Activated T-helper 1 cell treated with anti-CD3 and anti-CD28 coated beads, Interleukin-12 subunit alpha, Interleukin-12 subunit beta, Interleukin-2, Interleukin-4 antibody, amounts not matched to agents 30 ng/mL and 10 ng/mL and 1 ng/mL, durations not matched to agents 14 hours and 24 hours and 36 hours (primary cell): ENCODE measurements at regions of chr10 and their contacts with region 1.

Region 1: GRCh38 chr10:113563306-113564088 is 10.6 kb downstream of the HABP2 start:
- DNase-seq: peak; percentile 56
- H3K4me3 Mint-ChIP-seq: peak overlapping the region; percentile 72
- H3K27ac Mint-ChIP-seq: no peak overlapping the region
- H3K4me1 Mint-ChIP-seq: peaks cover 7% of the 10 kb centered on the region
- H3K27me3 Mint-ChIP-seq: no peaks in the 10 kb centered on the region

Region 2: DNA sequence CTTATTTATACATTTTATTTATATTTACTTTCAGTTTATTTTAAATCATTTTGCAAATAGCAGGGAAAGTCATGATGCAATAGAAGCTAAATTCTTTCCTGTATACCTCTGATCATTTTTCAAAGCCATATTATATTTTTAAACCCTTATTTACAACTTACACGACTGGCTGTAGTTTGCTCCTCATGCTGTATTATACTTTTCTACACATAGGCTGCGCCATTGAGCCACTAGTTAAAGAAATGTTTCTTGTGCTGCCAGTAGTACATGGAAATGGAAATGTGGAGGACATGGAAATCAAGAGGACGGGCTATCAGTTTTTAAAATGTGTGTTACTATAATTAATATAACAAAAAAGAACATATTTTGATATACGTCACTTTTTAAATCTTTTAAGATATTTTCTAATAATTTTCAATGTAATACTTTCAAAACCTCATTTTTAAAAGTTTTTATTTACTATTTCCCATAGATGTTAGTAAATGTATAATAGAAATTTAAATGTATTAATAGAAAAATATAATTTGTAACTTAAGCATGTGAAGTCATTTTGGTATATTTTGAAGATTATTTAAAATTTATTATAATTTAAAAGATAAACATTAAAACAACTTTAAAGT is 998.0 kb before region 1 on chr10:
- intact Hi-C with region 1: loop called (anchors 10 kb)
- DNase-seq: no peak
- H3K4me3 Mint-ChIP-seq: no peak overlapping the region
- H3K27ac Mint-ChIP-seq: no peak overlapping the region
- H3K4me1 Mint-ChIP-seq: no peaks in the 10 kb centered on the region
- H3K27me3 Mint-ChIP-seq: no peaks in the 10 kb centered on the region

Region 3: DNA sequence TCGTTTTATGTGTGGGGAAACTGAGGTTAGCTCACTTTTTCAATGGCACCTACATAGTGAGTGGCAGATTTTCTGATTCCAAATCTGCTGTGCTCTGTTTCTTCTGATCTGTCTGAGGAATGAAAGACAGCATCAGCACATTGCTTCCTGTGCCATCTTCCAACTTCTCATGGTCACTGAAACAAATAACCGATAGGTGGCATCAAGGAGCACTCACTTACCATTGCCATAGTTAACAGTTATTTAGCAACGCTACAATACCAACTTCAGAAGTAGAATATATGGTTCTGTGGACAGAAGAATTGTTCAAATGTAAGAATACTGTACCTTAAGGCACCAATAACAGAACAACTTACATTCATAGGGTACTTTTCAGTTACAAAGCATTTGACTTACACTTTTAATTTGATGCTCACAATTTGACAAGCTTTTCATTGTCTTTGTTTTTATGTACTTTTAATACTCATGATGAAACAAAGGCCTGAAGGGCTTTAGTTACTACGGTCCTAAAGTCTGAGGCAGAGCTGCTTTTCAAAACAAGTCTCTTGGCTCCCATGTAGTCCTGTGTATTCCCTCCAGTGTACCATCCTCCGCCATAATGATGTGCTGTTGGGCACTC is 842.3 kb before region 1 on chr10:
- intact Hi-C with region 1: loop called (anchors 1 kb)
- DNase-seq: no peak
- H3K4me3 Mint-ChIP-seq: no peak overlapping the region
- H3K27ac Mint-ChIP-seq: no peak overlapping the region
- H3K4me1 Mint-ChIP-seq: no peaks in the 10 kb centered on the region
- H3K27me3 Mint-ChIP-seq: no peaks in the 10 kb centered on the region

Region 4: GRCh38 chr10:113454341-113455061 is 109.0 kb before region 1 on chr10:
- intact Hi-C with region 1: loop called (anchors 10 kb)
- DNase-seq: no peak
- H3K4me3 Mint-ChIP-seq: no peak overlapping the region
- H3K27ac Mint-ChIP-seq: no peak overlapping the region
- H3K4me1 Mint-ChIP-seq: no peaks in the 10 kb centered on the region
- H3K27me3 Mint-ChIP-seq: no peaks in the 10 kb centered on the region

Region 5: DNA sequence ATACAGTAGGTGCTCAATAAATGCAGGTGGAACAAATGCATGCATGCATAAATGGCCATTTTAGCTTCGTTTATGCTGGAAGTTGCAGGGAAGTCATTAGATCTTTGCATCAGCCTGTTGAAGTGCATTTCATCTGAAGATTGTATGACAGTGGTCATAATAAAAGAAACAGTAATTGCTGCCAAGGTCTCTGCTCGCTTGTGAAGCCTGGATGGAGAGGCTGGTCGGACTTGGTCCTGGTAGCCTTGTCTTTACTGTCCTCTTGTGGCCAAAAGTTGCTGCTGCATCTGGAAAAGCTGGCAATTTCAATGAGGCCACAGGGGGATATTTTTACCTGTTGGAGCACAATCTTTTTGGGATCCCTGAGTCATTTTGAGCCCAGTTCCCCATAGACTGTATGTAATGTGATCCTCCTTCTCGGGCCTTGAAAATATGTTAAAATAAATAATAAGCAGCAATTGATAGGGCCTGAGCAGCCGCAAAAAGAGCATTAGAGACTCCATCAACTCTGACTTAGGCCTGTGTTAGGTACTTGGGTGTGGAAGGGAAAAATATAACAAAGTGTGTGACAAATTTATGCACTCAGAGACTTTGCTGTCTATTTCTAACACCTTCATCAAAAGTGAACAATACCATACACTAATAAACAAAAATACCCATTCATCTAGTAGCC is 42.2 kb before region 1 on chr10:
- intact Hi-C with region 1: loop called (anchors 1 kb)
- DNase-seq: no peak
- H3K4me3 Mint-ChIP-seq: no peak overlapping the region
- H3K27ac Mint-ChIP-seq: no peak overlapping the region
- H3K4me1 Mint-ChIP-seq: peaks cover 4% of the 10 kb centered on the region
- H3K27me3 Mint-ChIP-seq: peaks cover 8% of the 10 kb centered on the region

Region 6: GRCh38 chr10:113678690-113679462 is 115.4 kb after region 1 on chr10:
- intact Hi-C with region 1: no loop called
- DNase-seq: peak; percentile 66
- H3K4me3 Mint-ChIP-seq: peak overlapping the region; percentile 99
- H3K27ac Mint-ChIP-seq: peak overlapping the region; percentile 98
- H3K4me1 Mint-ChIP-seq: peaks cover 44% of the 10 kb centered on the region
- H3K27me3 Mint-ChIP-seq: peaks cover 9% of the 10 kb centered on the region

Region 7: GRCh38 chr10:113709221-113709838 is 145.8 kb after region 1 on chr10:
- intact Hi-C with region 1: no loop called
- DNase-seq: no peak
- H3K4me3 Mint-ChIP-seq: no peak overlapping the region
- H3K27ac Mint-ChIP-seq: no peak overlapping the region
- H3K4me1 Mint-ChIP-seq: peaks cover 35% of the 10 kb centered on the region
- H3K27me3 Mint-ChIP-seq: no peaks in the 10 kb centered on the region